IMR-90 (cell line): ENCODE measurements at regions of chr3 and their contacts with region 1.

Region 1: DNA sequence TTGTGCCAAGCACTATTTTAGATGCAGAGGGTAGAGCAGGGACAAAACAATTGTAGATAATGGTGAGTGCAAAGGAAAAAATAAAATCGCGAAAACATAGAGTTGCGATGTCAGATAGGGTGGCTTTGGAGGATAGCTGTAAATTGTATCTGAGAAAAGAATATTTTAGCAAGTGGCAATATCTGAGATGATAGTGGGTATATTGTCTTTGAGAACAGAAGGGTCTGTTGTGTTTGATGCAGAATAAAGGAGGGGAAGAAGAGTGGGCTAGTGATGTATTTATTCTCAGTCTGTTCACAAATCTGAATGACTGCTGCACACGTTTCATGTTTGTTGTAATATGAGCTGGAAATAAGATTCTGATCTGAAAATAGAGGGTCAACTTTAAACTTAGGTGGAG is 396.8 kb downstream of the CADM2 start:
- DNase-seq: no peak
- ATAC-seq: no peak
- H3K4me3 ChIP-seq: no peak overlapping the region
- H3K27ac ChIP-seq: no peak overlapping the region
- H3K4me1 ChIP-seq: no peaks in the 10 kb centered on the region
- H3K27me3 ChIP-seq: no peaks in the 10 kb centered on the region
- CTCF ChIP-seq: no peak
- POLR2A ChIP-seq: no peak
- RAD21 ChIP-seq: no peak

Region 2: DNA sequence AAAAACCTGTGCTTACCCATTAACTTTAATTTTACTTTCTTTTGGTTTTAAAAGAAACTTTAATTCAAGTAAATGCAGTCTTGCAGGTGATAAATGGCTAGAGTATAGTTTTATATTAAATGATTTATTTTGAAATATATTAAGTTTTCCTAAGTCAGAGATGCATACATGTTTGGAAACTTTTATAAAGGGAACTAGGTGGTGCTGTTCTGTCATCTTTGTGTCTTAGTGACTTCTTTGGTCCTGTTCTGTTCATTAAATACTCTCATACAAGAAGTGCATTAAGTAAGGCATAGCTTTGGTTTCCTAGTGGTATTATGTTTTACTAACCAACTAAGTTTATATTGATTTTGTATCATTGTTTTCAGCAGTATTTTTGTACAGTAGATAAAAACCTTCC is 381.2 kb before region 1 on chr3:
- CTCF ChIA-PET with region 1: no interaction called
- POLR2A ChIA-PET with region 1: no interaction called
- dilution Hi-C with region 1: no loop called
- in situ Hi-C with region 1: no loop called
- intact Hi-C with region 1: loop called (anchors 10 kb)
- DNase-seq: no peak
- ATAC-seq: no peak
- H3K4me3 ChIP-seq: no peak overlapping the region
- H3K27ac ChIP-seq: no peak overlapping the region
- H3K4me1 ChIP-seq: no peaks in the 10 kb centered on the region
- H3K27me3 ChIP-seq: no peaks in the 10 kb centered on the region
- CTCF ChIP-seq: no peak
- POLR2A ChIP-seq: no peak
- RAD21 ChIP-seq: no peak

Region 3: DNA sequence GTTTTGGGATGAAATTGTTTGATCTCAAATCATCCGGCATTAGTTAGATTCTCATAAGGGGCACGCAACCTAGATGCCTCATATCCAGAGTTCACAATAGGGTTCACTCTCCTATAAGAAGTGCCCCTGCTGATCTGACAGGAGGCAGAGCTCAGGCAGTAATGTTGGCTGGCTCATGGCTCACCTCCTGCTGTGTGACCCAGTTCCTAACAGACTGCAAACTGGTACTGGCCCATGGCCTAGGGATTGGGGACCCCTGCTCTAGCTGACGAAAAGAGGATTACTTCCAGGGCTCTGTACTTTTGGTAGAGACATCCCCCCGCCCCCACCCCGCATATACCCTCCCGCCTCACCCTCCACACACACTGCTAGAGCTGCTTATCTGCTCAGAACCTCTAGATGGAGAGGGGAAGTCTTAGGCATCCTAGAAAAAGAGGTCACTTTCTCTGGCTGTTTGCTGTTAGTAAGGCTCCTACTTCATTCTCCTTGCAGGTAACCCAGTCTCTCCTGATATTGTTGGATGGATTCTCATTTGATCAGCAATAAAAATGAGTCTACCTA is 526.3 kb after region 1 on chr3:
- CTCF ChIA-PET with region 1: no interaction called
- POLR2A ChIA-PET with region 1: no interaction called
- dilution Hi-C with region 1: no loop called
- in situ Hi-C with region 1: no loop called
- intact Hi-C with region 1: no loop called
- DNase-seq: no peak
- ATAC-seq: no peak
- H3K4me3 ChIP-seq: no peak overlapping the region
- H3K27ac ChIP-seq: no peak overlapping the region
- H3K4me1 ChIP-seq: no peaks in the 10 kb centered on the region
- H3K27me3 ChIP-seq: no peaks in the 10 kb centered on the region
- CTCF ChIP-seq: no peak
- POLR2A ChIP-seq: no peak
- RAD21 ChIP-seq: no peak

Region 4: DNA sequence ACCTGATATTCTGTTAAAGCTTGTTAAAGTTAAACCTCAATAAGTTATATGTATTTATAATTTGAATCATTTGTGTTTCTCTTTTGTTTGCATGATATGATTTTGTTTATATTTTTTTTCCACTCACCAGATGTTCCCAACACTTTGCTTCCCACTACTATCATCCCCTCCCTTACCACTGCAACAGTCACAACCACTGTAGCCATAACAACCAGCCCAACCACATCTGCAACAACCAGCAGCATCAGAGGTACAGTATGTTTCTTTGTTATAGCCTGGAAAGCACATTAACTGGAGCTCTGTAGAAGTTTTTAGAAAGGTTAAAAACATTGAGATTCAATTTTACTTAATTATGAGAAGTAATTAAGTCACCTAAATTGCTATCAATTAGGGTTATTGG is 623.5 kb after region 1 on chr3:
- CTCF ChIA-PET with region 1: no interaction called
- POLR2A ChIA-PET with region 1: no interaction called
- dilution Hi-C with region 1: no loop called
- in situ Hi-C with region 1: no loop called
- intact Hi-C with region 1: no loop called
- DNase-seq: no peak
- ATAC-seq: no peak
- H3K4me3 ChIP-seq: no peak overlapping the region
- H3K27ac ChIP-seq: no peak overlapping the region
- H3K4me1 ChIP-seq: no peaks in the 10 kb centered on the region
- H3K27me3 ChIP-seq: no peaks in the 10 kb centered on the region
- CTCF ChIP-seq: no peak
- POLR2A ChIP-seq: no peak
- RAD21 ChIP-seq: no peak